Transverse colon (tissue), 4 donors: ENCODE measurements at regions of chr7 and their contacts with region 1.

Region 1: DNA sequence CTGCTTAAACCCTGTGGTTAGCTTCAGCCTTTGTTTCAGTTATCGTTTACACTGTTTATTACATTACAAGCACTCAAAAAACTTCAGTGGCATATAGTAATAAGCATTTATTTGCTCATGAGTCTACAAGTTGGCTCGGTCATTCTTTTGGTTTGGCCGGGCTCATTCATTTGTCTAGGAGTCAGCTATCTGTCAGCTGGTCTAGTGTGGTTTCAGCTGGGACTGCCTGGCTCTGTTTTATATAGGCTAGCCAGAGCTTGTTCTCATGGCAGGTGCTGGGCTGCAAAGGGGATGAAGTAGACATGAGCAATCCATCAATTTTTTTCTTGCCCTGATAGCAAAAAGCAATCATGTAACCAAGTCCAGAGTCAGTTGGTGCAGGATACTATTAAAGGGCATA is 103.6 kb downstream of the MKLN1 start:
- DNase-seq: peak; percentile 10
- H3K4me3 ChIP-seq: no peak overlapping the region
- H3K27ac ChIP-seq: no peak overlapping the region
- H3K4me1 ChIP-seq: peaks cover 0 to 4% (median 0%) of the 10 kb centered on the region in 4 donors
- H3K27me3 ChIP-seq: no peaks in the 10 kb centered on the region
- CTCF ChIP-seq: no peak
- EP300 ChIP-seq: no peak
- POLR2A ChIP-seq: no peak

Region 2: GRCh38 chr7:130865408-130866236 is 565.7 kb before region 1 on chr7:
- in situ Hi-C with region 1: loop called in 1 of 4 experiments (anchors 25 kb)
- intact Hi-C with region 1: no loop called
- DNase-seq: no peak
- H3K4me3 ChIP-seq: no peak overlapping the region
- H3K27ac ChIP-seq: no peak overlapping the region
- H3K4me1 ChIP-seq: no peaks in the 10 kb centered on the region
- H3K27me3 ChIP-seq: no peaks in the 10 kb centered on the region
- CTCF ChIP-seq: peak in 1 of 5 experiments; percentile 8
- EP300 ChIP-seq: no peak
- POLR2A ChIP-seq: no peak

Region 3: DNA sequence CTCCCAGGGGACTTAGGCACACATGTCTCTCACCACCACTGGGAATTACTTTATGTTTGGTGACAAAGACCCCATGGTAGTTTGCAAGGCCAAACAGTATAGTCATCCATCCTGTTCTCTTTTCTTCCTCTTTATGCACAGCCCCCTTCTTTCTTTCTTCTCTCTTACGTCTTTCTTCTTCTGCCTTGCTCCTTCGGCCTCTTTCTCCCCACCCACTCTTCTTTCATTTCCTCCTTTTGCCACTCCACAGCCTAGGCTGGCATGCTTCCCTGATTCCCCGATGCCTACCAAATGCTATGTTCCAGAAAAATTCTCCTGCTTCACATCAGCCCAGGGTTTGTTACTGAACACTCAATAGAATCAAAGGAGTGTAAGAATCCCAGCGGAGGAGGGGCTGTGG is 166.1 kb before region 1 on chr7:
- in situ Hi-C with region 1: no loop called
- intact Hi-C with region 1: no loop called
- DNase-seq: no peak
- H3K4me3 ChIP-seq: no peak overlapping the region
- H3K27ac ChIP-seq: no peak overlapping the region
- H3K4me1 ChIP-seq: no peaks in the 10 kb centered on the region
- H3K27me3 ChIP-seq: no peaks in the 10 kb centered on the region
- CTCF ChIP-seq: no peak
- EP300 ChIP-seq: no peak
- POLR2A ChIP-seq: no peak

Region 4: GRCh38 chr7:131581241-131582051 is 150.2 kb after region 1 on chr7:
- in situ Hi-C with region 1: no loop called
- intact Hi-C with region 1: no loop called
- DNase-seq: no peak
- H3K4me3 ChIP-seq: no peak overlapping the region
- H3K27ac ChIP-seq: peak overlapping the region in 2 of 4 donors; percentile 13 to 43
- H3K4me1 ChIP-seq: no peaks in the 10 kb centered on the region
- H3K27me3 ChIP-seq: no peaks in the 10 kb centered on the region
- CTCF ChIP-seq: no peak
- EP300 ChIP-seq: no peak
- POLR2A ChIP-seq: no peak